Activated CD4-positive, alpha-beta T cell treated with anti-CD3 and anti-CD28 coated beads, Interleukin-2, amount 10 ng/mL, durations not matched to agents 24 days and 14 days (primary cell): ENCODE measurements at regions of chr4 and their contacts with region 1.

Region 1: DNA sequence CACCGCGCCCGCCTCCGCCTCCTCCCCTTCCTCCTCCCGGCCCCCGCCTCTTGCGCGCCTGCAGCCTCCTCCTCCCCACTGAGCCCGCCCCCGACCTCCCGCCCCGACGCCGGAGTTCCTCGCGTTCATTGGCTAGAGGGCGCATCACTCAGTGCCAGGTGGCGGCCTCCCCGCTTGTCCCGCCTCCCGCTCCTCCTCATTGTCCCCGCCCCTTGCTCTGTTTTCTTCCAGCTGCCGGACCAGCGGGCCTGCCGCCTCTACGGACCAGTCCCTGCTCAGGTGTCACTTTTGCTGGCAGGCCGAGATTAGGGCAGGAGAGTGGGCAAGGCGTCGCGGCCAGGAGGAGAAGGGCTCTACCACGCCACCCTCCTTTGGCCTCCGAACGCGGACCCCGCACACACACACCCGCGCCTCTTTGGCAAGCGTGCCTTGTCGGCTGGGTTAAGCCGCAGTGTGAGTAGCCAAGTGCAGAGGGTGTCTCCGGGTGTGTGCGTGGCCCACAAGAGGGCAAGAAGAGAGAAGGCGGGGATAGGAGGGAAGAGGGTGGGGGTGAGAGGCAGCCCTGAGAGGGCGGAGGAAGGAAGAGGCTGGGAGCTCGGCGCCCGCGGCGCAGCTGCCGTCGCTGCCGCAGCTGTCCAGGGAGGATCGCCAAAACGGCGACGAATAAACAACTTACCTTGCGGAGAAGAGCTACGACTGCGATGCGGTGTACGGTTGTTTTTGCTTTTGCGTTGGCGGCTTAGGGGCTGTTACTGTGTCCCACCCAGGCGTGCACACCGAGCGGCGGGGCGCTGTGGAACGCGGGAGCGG is 436 bp upstream of the PPP3CA start:
- DNase-seq: peak; percentile 99
- H3K4me3 Mint-ChIP-seq: peak overlapping the region; percentile 97
- H3K27ac Mint-ChIP-seq: peak overlapping the region; percentile 91
- H3K4me1 Mint-ChIP-seq: peaks cover 27% of the 10 kb centered on the region
- H3K27me3 Mint-ChIP-seq: peaks cover 62% of the 10 kb centered on the region

Region 2: GRCh38 chr4:99949034-99949998 is 1398.4 kb before region 1 on chr4:
- intact Hi-C with region 1: loop called (anchors 2 kb)
- DNase-seq: peak; percentile 96
- H3K4me3 Mint-ChIP-seq: no peak overlapping the region
- H3K27ac Mint-ChIP-seq: no peak overlapping the region
- H3K4me1 Mint-ChIP-seq: peaks cover 26% of the 10 kb centered on the region
- H3K27me3 Mint-ChIP-seq: no peaks in the 10 kb centered on the region

Region 3: DNA sequence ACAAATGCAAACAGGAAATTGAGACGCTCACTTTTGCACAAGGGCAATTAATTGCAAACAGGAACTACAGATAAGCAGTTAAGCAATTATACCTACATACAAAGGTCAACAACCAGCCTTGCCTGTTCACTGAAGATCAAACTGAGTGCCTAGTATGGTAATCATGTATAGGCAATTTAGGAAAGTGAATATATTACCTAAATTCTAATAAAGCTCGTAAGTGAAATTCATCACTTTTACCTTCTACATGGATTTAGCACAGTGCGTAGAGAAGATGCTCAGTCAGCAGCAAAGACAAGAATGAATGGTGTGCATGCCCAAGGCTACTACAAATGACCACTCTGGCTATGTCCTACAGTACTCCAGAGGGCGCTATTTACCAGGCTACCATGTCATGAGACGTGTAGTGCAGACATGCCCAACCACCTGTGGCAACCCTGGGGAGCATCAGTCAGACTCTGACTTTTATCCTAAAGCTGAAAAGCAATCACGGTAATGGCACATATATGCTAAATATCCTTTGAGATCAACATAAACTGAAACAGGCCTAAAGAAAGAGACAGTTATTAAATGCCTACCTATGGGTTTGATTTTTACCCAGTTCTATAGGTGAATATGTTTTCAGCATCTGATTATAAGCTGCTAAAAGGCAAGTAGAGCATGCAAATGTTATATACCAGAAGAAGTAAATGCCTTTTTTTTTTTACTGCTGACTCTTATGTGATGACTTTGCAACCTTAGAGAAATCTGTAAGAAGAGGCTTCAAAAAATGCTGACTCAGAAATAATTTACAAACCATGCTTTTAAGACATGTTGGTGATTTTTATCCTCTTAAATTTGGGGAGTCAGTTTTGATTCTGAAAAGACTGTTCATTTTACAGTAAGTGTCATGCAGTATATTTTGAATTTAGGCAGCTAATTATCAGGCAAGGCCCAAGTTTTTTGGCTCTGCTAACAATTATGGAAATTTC is 178.4 kb before region 1 on chr4:
- intact Hi-C with region 1: loop called (anchors 2 kb)
- DNase-seq: peak; percentile 87
- H3K4me3 Mint-ChIP-seq: no peak overlapping the region
- H3K27ac Mint-ChIP-seq: no peak overlapping the region
- H3K4me1 Mint-ChIP-seq: peaks cover 2% of the 10 kb centered on the region
- H3K27me3 Mint-ChIP-seq: no peaks in the 10 kb centered on the region

Region 4: DNA sequence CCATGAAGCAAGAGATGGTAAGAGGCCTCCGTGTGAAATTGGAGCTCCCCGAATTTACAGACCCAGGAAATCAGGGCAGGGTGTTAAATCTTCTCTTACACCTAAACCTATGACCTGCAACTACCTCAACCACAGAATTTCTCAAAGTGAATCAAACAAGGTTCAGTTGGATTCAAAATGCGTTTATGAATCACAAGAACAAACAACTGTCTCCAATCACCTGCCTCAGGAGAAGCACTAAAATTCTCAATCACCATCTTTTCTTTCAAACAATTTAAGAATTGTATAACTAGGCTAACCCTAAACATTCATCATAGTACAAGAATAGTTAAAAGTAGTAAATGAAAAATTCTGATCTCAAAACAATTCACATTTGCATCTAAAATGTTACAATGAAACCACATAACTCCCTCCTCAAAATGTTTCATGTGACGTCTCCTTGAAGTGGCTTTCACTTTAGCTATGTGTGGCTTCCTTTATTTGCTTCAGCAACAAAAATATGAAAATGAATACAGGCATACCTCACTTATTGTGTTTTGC is 19.6 kb before region 1 on chr4:
- intact Hi-C with region 1: loop called (anchors 1 kb)
- DNase-seq: peak; percentile 76
- H3K4me3 Mint-ChIP-seq: peak overlapping the region; percentile 68
- H3K27ac Mint-ChIP-seq: peak overlapping the region; percentile 54
- H3K4me1 Mint-ChIP-seq: peaks cover 18% of the 10 kb centered on the region
- H3K27me3 Mint-ChIP-seq: peaks cover 37% of the 10 kb centered on the region

Region 5: DNA sequence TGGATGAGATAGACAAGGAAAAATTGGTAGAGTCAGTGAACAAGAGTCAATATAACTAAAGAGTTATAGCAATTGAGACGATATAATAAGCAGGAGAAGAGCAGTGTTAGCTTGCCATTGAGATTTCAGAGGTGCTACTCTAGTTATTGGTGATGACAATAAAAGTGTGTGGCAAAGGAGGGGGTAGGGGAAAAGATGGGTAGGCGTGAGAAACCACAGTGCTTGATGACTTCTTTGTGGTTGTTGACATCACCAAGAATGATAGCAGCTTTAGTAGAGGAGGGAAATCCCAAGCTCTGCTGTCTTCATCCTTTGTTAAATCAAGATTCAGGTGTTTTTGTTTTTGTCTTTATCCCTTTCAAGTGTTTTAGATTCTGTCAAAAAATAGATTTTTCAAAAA is 179.4 kb after region 1 on chr4:
- intact Hi-C with region 1: loop called (anchors 1 kb)
- DNase-seq: peak; percentile 87
- H3K4me3 Mint-ChIP-seq: peak overlapping the region; percentile 45
- H3K27ac Mint-ChIP-seq: peak overlapping the region; percentile 64
- H3K4me1 Mint-ChIP-seq: peaks cover 15% of the 10 kb centered on the region
- H3K27me3 Mint-ChIP-seq: peaks cover 46% of the 10 kb centered on the region